Mammary epithelial cell (primary cell): ENCODE measurements at regions of chr9 and their contacts with region 1.

Region 1: DNA sequence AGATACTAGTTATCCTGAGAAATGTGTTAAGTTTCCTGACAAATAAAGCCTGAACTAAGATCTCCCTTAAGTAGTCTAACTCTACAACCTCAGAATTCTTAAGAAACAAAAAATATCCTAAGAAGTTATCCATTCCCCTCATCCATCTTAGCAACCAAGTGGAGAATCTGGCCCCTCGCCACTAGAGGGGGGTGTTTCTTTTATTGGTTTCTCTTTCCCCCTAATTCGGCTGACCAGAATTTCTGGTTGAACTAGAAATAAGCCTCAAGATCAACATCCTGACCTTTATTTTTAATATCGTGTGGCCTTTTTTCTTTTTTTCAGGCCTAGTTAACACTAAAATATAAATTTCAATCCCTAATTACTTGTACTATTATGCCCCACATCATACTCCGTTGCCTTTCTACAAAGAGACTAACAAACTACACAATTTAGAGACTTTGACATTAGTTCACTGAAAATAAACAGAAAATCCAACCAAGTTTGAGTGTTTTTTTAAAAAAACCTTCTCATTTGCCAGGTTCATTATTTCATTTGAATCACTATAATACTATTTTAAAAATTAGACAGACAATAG is 14.3 kb upstream of the NR4A3 start:
- DNase-seq: peak; percentile 63
- H3K4me3 ChIP-seq: no peak overlapping the region
- H3K27ac ChIP-seq: no peak overlapping the region
- H3K4me1 ChIP-seq: peaks cover 4% of the 10 kb centered on the region
- H3K27me3 ChIP-seq: no peaks in the 10 kb centered on the region
- CTCF ChIP-seq: peak; percentile 71 to 78

Region 2: GRCh38 chr9:99752417-99753109 is 54.8 kb before region 1 on chr9:
- CTCF ChIA-PET with region 1: no interaction called
- dilution Hi-C with region 1: no loop called
- in situ Hi-C with region 1: loop called in 1 of 2 experiments (anchors 10 kb)
- intact Hi-C with region 1: no loop called
- DNase-seq: peak; percentile 89
- H3K4me3 ChIP-seq: peak overlapping the region in 1 of 3 experiments; percentile 28
- H3K27ac ChIP-seq: peak overlapping the region; percentile 95
- H3K4me1 ChIP-seq: peaks cover 14% of the 10 kb centered on the region
- H3K27me3 ChIP-seq: no peaks in the 10 kb centered on the region
- CTCF ChIP-seq: no peak

Region 3: GRCh38 chr9:99906403-99907207 is 99.2 kb after region 1 on chr9 and contains the start of gene STX17:
- CTCF ChIA-PET with region 1: no interaction called
- dilution Hi-C with region 1: no loop called
- in situ Hi-C with region 1: loop called in 1 of 2 experiments (anchors 25 kb)
- intact Hi-C with region 1: loop called (anchors 5 kb)
- DNase-seq: peak; percentile 82
- H3K4me3 ChIP-seq: peak within 1 kb of the TSS; percentile 89 to 96 (median 92)
- H3K27ac ChIP-seq: peak within 1 kb of the TSS; percentile 78
- H3K4me1 ChIP-seq: peaks cover 12% of the 10 kb centered on the region
- H3K27me3 ChIP-seq: no peaks in the 10 kb centered on the region
- CTCF ChIP-seq: no peak
- total RNA-seq, gene STX17: 22.0 to 32.1 TPM

Region 4: DNA sequence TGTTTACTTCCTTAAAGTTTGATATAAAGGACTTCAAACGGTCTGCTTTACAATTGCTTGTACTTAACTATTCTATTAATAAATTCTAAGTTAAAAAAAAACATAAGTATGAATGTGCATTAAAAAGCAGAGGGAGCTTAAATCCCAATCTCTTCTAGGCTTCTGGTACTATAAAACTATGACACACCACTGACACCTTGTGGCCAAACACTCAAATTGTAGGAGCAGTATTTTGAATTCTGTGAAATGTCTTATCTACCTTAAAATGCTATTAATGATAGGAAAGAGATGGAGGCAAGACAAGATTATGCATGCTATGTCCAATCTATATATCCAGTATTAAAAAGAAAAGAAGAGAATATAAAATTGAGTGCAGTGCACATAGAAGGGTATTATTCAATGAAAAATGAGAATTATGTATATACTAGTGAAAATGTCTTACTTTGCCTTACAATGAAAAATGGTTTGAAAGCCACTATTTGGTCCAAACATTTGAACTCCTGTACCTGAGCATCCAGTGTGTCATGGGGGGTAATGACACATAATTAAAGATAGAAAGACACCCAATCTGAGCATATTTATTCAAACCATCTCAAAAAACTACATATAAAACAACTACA is 203.8 kb after region 1 on chr9:
- CTCF ChIA-PET with region 1: no interaction called
- dilution Hi-C with region 1: no loop called
- in situ Hi-C with region 1: no loop called
- intact Hi-C with region 1: loop called (anchors 5 kb)
- DNase-seq: peak; percentile 29
- H3K4me3 ChIP-seq: no peak overlapping the region
- H3K27ac ChIP-seq: no peak overlapping the region
- H3K4me1 ChIP-seq: no peaks in the 10 kb centered on the region
- H3K27me3 ChIP-seq: no peaks in the 10 kb centered on the region
- CTCF ChIP-seq: peak; percentile 60 to 69

Region 5: DNA sequence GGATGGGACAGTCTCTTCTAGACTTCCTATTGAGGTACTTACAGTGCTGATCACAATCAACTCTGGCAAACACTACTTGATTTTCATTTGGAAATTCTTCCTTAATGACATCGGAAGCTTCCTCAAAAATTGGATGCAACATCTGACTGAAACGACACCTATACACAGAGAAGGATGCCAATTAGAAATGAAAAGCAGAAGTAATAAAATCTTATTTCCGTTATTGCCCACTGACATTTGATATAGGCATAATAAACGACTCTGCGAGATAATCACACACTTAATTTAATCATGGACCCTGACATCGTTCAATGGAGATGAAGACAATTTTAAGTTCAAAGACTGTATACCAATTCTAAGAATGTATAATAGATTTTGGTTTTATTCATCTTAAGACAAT is 245.0 kb after region 1 on chr9:
- CTCF ChIA-PET with region 1: no interaction called
- dilution Hi-C with region 1: no loop called
- in situ Hi-C with region 1: no loop called
- intact Hi-C with region 1: no loop called
- DNase-seq: no peak
- H3K4me3 ChIP-seq: no peak overlapping the region
- H3K27ac ChIP-seq: no peak overlapping the region
- H3K4me1 ChIP-seq: no peaks in the 10 kb centered on the region
- H3K27me3 ChIP-seq: no peaks in the 10 kb centered on the region
- CTCF ChIP-seq: no peak